Caco-2 (cell line): ENCODE measurements at regions of chr6 and their contacts with region 1.

Region 1: GRCh38 chr6:159134701-159135364 is 34.4 kb upstream of the FNDC1 start:
- DNase-seq: peak; percentile 56 to 73
- H3K4me3 ChIP-seq: no peak overlapping the region
- H3K4me3 Mint-ChIP-seq: no peak overlapping the region
- H3K27ac Mint-ChIP-seq: no peak overlapping the region
- H3K4me1 ChIP-seq: no peaks in the 10 kb centered on the region
- H3K4me1 Mint-ChIP-seq: no peaks in the 10 kb centered on the region
- H3K27me3 ChIP-seq: no peaks in the 10 kb centered on the region; the same call in 1 of the 2 replicates
- H3K27me3 Mint-ChIP-seq: peaks cover 34% of the 10 kb centered on the region
- CTCF ChIP-seq: peak; percentile 73 to 90

Region 2: DNA sequence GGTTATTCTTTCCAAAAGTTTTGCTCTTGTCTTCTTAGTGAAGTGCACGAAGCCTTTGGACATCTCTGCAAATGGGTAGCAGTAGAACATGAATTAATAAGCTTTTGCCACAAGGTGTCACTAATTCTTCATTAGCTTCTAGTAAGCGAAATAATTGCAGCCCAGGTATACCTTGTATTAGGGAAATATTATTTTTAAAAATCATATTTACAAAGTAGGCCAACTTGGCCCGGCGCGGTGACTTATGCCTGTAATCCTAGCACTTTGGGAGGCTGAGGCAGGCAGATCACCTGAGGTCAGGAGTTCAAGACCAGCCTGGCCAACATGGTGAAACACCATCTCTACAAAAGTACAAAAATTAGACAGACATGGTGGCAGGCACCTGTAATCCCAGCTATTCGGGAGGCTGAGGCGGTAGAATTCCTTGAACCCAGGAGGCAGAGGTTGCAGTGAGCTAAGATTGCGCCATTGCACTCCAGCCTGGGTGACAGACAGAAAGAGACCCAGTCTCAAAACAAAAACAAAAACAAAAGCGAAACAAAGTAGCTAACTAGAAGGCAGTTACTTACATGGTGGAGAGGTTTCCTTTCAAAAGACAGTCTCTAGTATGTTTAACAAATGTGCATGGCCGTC is 126.1 kb before region 1 on chr6:
- CTCF ChIA-PET with region 1: interaction called, 37 read pairs
- POLR2A ChIA-PET with region 1: interaction called, 3 read pairs
- intact Hi-C with region 1: loop called (anchors 1 kb)
- DNase-seq: peak in 1 of 2 experiments; percentile 30
- H3K4me3 ChIP-seq: no peak overlapping the region
- H3K4me3 Mint-ChIP-seq: no peak overlapping the region
- H3K27ac Mint-ChIP-seq: no peak overlapping the region
- H3K4me1 ChIP-seq: no peaks in the 10 kb centered on the region
- H3K4me1 Mint-ChIP-seq: peaks cover 7% of the 10 kb centered on the region
- H3K27me3 ChIP-seq: no peaks in the 10 kb centered on the region
- H3K27me3 Mint-ChIP-seq: no peaks in the 10 kb centered on the region
- CTCF ChIP-seq: peak; percentile 30 to 46

Region 3: GRCh38 chr6:159042003-159042825 is 92.6 kb before region 1 on chr6:
- CTCF ChIA-PET with region 1: interaction called, 20 read pairs
- POLR2A ChIA-PET with region 1: no interaction called
- intact Hi-C with region 1: loop called (anchors 1 kb)
- DNase-seq: peak; percentile 72 to 80
- H3K4me3 ChIP-seq: no peak overlapping the region
- H3K4me3 Mint-ChIP-seq: no peak overlapping the region
- H3K27ac Mint-ChIP-seq: peak overlapping the region; percentile 61
- H3K4me1 ChIP-seq: no peaks in the 10 kb centered on the region
- H3K4me1 Mint-ChIP-seq: no peaks in the 10 kb centered on the region
- H3K27me3 ChIP-seq: no peaks in the 10 kb centered on the region
- H3K27me3 Mint-ChIP-seq: peaks cover 19% of the 10 kb centered on the region
- CTCF ChIP-seq: peak; percentile 87 to 91